Naive thymus-derived CD4-positive, alpha-beta T cell (primary cell): ENCODE measurements at regions of chr2 and their contacts with region 1.

Region 1: GRCh38 chr2:241702132-241703031 is 543 bp downstream of the ING5 start:
- DNase-seq: peak; percentile 83 to 92 (median 89)
- ATAC-seq: peak; percentile 89
- H3K4me3 ChIP-seq: peak overlapping the region; percentile 74
- H3K4me3 Mint-ChIP-seq: peak overlapping the region; percentile 74 to 89 (median 84)
- H3K27ac ChIP-seq: peak overlapping the region; percentile 75
- H3K27ac Mint-ChIP-seq: peak overlapping the region; percentile 75 to 87 (median 82)
- H3K4me1 ChIP-seq: peaks cover 7 to 12% of the 10 kb centered on the region in 2 donors
- H3K4me1 Mint-ChIP-seq: peaks cover 11 to 38% (median 26%) of the 10 kb centered on the region in 7 donors
- H3K27me3 ChIP-seq: no peaks in the 10 kb centered on the region
- H3K27me3 Mint-ChIP-seq: no peaks in the 10 kb centered on the region

Region 2: GRCh38 chr2:241271641-241272297 is 430.6 kb before region 1 on chr2:
- CTCF ChIA-PET with region 1: no interaction called
- POLR2A ChIA-PET with region 1: no interaction called
- intact Hi-C with region 1: loop called in 1 of 2 experiments (anchors 2 kb)
- DNase-seq: peak; percentile 37 to 69 (median 42)
- ATAC-seq: peak; percentile 83
- H3K4me3 ChIP-seq: peak overlapping the region; percentile 63
- H3K4me3 Mint-ChIP-seq: peak overlapping the region; percentile 91 to 97 (median 94)
- H3K27ac ChIP-seq: peak overlapping the region; percentile 76
- H3K27ac Mint-ChIP-seq: peak overlapping the region; percentile 70 to 94 (median 89)
- H3K4me1 ChIP-seq: peaks cover 8 to 16% of the 10 kb centered on the region in 2 donors
- H3K4me1 Mint-ChIP-seq: peaks cover 41 to 65% (median 60%) of the 10 kb centered on the region in 7 donors
- H3K27me3 ChIP-seq: no peaks in the 10 kb centered on the region
- H3K27me3 Mint-ChIP-seq: no peaks in the 10 kb centered on the region

Region 3: GRCh38 chr2:241609859-241610793 is 92.3 kb before region 1 on chr2:
- CTCF ChIA-PET with region 1: no interaction called
- POLR2A ChIA-PET with region 1: no interaction called
- intact Hi-C with region 1: loop called in 1 of 2 experiments (anchors 2 kb)
- DNase-seq: peak; percentile 87 to 92 (median 90)
- ATAC-seq: peak; percentile 99
- H3K4me3 ChIP-seq: peak overlapping the region; percentile 53
- H3K4me3 Mint-ChIP-seq: peak overlapping the region in 9 of 10 donors; percentile 61 to 79 (median 71)
- H3K27ac ChIP-seq: peak overlapping the region; percentile 61
- H3K27ac Mint-ChIP-seq: peak overlapping the region; percentile 9 to 95 (median 68)
- H3K4me1 ChIP-seq: peaks cover 14 to 17% of the 10 kb centered on the region in 2 donors
- H3K4me1 Mint-ChIP-seq: peaks cover 16 to 33% (median 24%) of the 10 kb centered on the region in 7 donors
- H3K27me3 ChIP-seq: no peaks in the 10 kb centered on the region
- H3K27me3 Mint-ChIP-seq: no peaks in the 10 kb centered on the region

Region 4: GRCh38 chr2:241686649-241687425 is 15.5 kb before region 1 on chr2 and contains the start of gene DTYMK:
- CTCF ChIA-PET with region 1: interaction called, 12 read pairs
- POLR2A ChIA-PET with region 1: interaction called, 86 read pairs
- intact Hi-C with region 1: loop called (anchors 1 kb)
- DNase-seq: peak; percentile 92 to 98 (median 97)
- ATAC-seq: peak; percentile 97
- H3K4me3 ChIP-seq: peak within 1 kb of the TSS; percentile 91
- H3K4me3 Mint-ChIP-seq: peak within 1 kb of the TSS; percentile 84 to 98 (median 95)
- H3K27ac ChIP-seq: peak within 1 kb of the TSS; percentile 81
- H3K27ac Mint-ChIP-seq: peak within 1 kb of the TSS; percentile 74 to 96 (median 88)
- H3K4me1 ChIP-seq: peaks cover 8 to 18% of the 10 kb centered on the region in 2 donors
- H3K4me1 Mint-ChIP-seq: peaks cover 4 to 40% (median 31%) of the 10 kb centered on the region in 7 donors
- H3K27me3 ChIP-seq: no peaks in the 10 kb centered on the region
- H3K27me3 Mint-ChIP-seq: no peaks in the 10 kb centered on the region
- total RNA-seq, gene DTYMK: 12.0 to 65.7 (median 17.0) TPM

Region 5: DNA sequence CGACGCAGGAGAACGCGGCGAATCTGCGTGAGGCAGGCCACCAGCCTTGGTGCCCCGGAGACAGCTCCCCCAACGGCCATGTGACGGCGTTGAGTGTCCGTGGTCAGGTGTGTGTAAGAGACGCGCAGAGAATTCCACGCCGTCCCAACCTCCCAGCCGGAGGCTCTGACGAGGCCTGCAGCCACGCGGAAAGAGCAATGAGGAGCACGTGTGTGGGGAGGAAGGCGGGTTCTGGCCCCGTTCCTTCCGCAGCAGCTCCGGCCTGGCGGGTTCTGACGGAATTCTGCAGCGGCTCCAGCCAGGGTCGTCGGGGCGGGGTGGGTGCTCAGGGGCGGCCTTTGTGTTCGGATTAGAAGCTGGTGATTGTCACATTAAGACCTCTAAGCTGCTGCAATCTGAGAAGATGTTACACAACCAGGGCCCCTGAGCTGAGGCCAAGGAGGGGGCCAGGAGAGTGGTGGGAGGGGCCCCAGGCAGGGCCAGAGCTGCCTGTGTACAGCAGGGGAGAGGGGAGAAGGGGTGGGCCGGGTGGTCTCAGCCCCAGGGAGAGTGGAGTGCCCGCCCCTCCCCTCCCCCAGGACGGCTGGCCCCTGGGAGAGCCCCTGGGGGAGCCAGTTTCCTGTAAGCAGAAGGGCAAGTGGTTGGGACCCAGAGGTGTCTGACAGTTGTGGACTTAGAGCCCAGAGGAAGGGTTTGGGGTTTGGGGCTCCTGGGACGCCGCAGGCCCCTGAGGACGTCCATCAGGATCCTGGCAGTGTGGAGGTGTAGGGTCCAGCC is 69.1 kb after region 1 on chr2:
- CTCF ChIA-PET with region 1: no interaction called
- POLR2A ChIA-PET with region 1: no interaction called
- intact Hi-C with region 1: no loop called
- DNase-seq: peak in 1 of 9 donors; percentile 14
- ATAC-seq: no peak
- H3K4me3 ChIP-seq: no peak overlapping the region
- H3K4me3 Mint-ChIP-seq: peak overlapping the region in 6 of 10 donors; percentile 53 to 76 (median 66)
- H3K27ac ChIP-seq: no peak overlapping the region
- H3K27ac Mint-ChIP-seq: peak overlapping the region in 7 of 9 donors; percentile 22 to 86 (median 66)
- H3K4me1 ChIP-seq: peaks cover 8 to 10% of the 10 kb centered on the region in 2 donors
- H3K4me1 Mint-ChIP-seq: peaks cover 6 to 14% (median 12%) of the 10 kb centered on the region in 7 donors
- H3K27me3 ChIP-seq: no peaks in the 10 kb centered on the region
- H3K27me3 Mint-ChIP-seq: no peaks in the 10 kb centered on the region

Region 6: GRCh38 chr2:241803387-241804325 is 101.3 kb after region 1 on chr2:
- CTCF ChIA-PET with region 1: no interaction called
- POLR2A ChIA-PET with region 1: no interaction called
- intact Hi-C with region 1: loop called in 1 of 2 experiments (anchors 5 kb)
- DNase-seq: peak in 5 of 9 donors; percentile 28 to 55 (median 37)
- ATAC-seq: peak; percentile 71
- H3K4me3 ChIP-seq: peak overlapping the region; percentile 57
- H3K4me3 Mint-ChIP-seq: peak overlapping the region; percentile 23 to 76 (median 66)
- H3K27ac ChIP-seq: no peak overlapping the region
- H3K27ac Mint-ChIP-seq: peak overlapping the region in 3 of 9 donors; percentile 33 to 48 (median 42)
- H3K4me1 ChIP-seq: peaks cover 11 to 15% of the 10 kb centered on the region in 2 donors
- H3K4me1 Mint-ChIP-seq: peaks cover 0 to 15% (median 8%) of the 10 kb centered on the region in 7 donors
- H3K27me3 ChIP-seq: peaks cover 0 to 4% of the 10 kb centered on the region in 2 donors
- H3K27me3 Mint-ChIP-seq: peaks cover 0 to 6% (median 0%) of the 10 kb centered on the region in 5 donors